ENCODE measurements at regions of chrX and their contacts with region 1.

Region 1: GRCh38 chrX:20141281-20142220 is at the start of gene EIF1AX:
- DNase-seq: peak; percentile 97
- H3K4me3 ChIP-seq: peak within 1 kb of the TSS; percentile 69 to 81
- H3K27ac ChIP-seq: peak within 1 kb of the TSS; percentile 77 to 88
- H3K4me1 ChIP-seq: no peaks in the 10 kb centered on the region
- H3K27me3 ChIP-seq: no peaks in the 10 kb centered on the region
- CTCF ChIP-seq: no peak
- POLR2A ChIP-seq: peak; percentile 4
- total RNA-seq, gene EIF1AX: 26.9 to 27.6 TPM

Region 2: GRCh38 chrX:20266810-20267606 is 125.5 kb after region 1 on chrX and contains the start of gene RPS6KA3:
- intact Hi-C with region 1: loop called (anchors 5 kb)
- DNase-seq: peak; percentile 94
- H3K4me3 ChIP-seq: peak within 1 kb of the TSS; percentile 61 to 68
- H3K27ac ChIP-seq: peak within 1 kb of the TSS; percentile 76 to 86
- H3K4me1 ChIP-seq: no peaks in the 10 kb centered on the region
- H3K27me3 ChIP-seq: no peaks in the 10 kb centered on the region
- CTCF ChIP-seq: no peak
- POLR2A ChIP-seq: no peak
- total RNA-seq, gene RPS6KA3: 12.5 to 12.6 TPM